Endothelial cell of umbilical vein (primary cell): ENCODE measurements at regions of chr4 and their contacts with region 1.

Region 1: GRCh38 chr4:75916091-75916661 is 13.9 kb upstream of the PPEF2 start:
- DNase-seq: peak; percentile 73
- H3K4me3 ChIP-seq: no peak overlapping the region
- H3K27ac ChIP-seq: no peak overlapping the region
- H3K4me1 ChIP-seq: no peaks in the 10 kb centered on the region
- H3K27me3 ChIP-seq: no peaks in the 10 kb centered on the region
- CTCF ChIP-seq: peak; percentile 64 to 75
- POLR2A ChIP-seq: no peak

Region 2: GRCh38 chr4:75940692-75941253 is 24.6 kb after region 1 on chr4 and contains the start of gene NAAA:
- CTCF ChIA-PET with region 1: interaction called, 30 read pairs
- POLR2A ChIA-PET with region 1: no interaction called
- dilution Hi-C with region 1: no loop called
- intact Hi-C with region 1: loop called (anchors 1 kb)
- DNase-seq: peak; percentile 81
- H3K4me3 ChIP-seq: peak within 1 kb of the TSS; percentile 46 to 62 (median 61)
- H3K27ac ChIP-seq: no peak within 1 kb of the TSS
- H3K4me1 ChIP-seq: peaks cover 3% of the 10 kb centered on the region
- H3K27me3 ChIP-seq: no peaks in the 10 kb centered on the region
- CTCF ChIP-seq: peak in 1 of 2 donors; percentile 36
- POLR2A ChIP-seq: no peak
- total RNA-seq, gene NAAA: 15.3 and 20.3 TPM in 2 replicates

Region 3: DNA sequence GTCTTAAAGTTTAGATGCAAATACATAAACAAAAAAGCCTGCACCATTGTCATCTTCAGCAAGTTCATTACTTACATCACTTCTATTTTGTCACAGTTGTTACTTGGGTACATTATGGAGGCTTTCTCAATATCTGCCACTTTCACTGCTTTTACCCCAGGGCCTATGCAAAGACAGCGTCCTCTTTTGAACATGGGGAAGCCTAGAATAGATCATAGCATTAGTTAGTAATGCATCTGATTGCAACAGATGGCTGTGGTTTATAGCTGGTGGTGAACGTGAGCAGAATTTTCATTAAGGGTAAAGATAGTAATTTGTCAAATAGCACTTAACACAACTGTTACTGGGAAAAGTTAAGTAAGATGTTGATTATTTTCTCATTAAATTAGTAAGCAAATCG is 119.0 kb after region 1 on chr4:
- CTCF ChIA-PET with region 1: no interaction called
- POLR2A ChIA-PET with region 1: no interaction called
- dilution Hi-C with region 1: no loop called
- intact Hi-C with region 1: no loop called
- DNase-seq: no peak
- H3K4me3 ChIP-seq: no peak overlapping the region
- H3K27ac ChIP-seq: no peak overlapping the region
- H3K4me1 ChIP-seq: peaks cover 11% of the 10 kb centered on the region
- H3K27me3 ChIP-seq: no peaks in the 10 kb centered on the region
- CTCF ChIP-seq: no peak
- POLR2A ChIP-seq: no peak

Region 4: GRCh38 chr4:76067652-76068286 is 151.6 kb after region 1 on chr4:
- CTCF ChIA-PET with region 1: interaction called, 6 read pairs
- POLR2A ChIA-PET with region 1: no interaction called
- dilution Hi-C with region 1: no loop called
- intact Hi-C with region 1: loop called (anchors 5 kb)
- DNase-seq: peak; percentile 76
- H3K4me3 ChIP-seq: no peak overlapping the region
- H3K27ac ChIP-seq: no peak overlapping the region
- H3K4me1 ChIP-seq: no peaks in the 10 kb centered on the region
- H3K27me3 ChIP-seq: peaks cover 0 to 2% of the 10 kb centered on the region in 2 experiments
- CTCF ChIP-seq: peak; percentile 68 to 70
- POLR2A ChIP-seq: no peak